HEK293T (cell line): ENCODE measurements at regions of chr15 and their contacts with region 1.

Region 1: GRCh38 chr15:67863442-67863987 is 23.7 kb upstream of the RNU6-1 start:
- DNase-seq: peak; percentile 91

Region 2: DNA sequence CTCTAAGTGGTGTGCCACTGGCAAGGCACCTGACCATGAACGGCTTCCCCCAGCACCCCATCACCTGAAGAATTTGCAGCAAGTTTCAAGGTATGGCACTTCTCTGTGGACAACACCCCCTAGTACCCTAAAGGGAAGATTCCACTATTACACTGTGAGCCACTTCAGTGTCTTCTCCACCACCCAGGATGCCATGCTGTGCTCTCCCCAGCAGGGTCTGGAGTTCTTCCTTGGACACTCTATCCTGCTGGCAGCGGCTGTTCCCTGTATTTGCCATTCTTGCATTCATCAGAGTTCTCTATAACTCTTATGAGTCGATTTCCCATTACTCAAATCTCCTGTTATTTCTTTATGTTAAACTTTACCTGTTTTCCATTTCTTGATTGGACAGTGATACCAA is 10.3 kb after region 1 on chr15:
- CTCF ChIA-PET with region 1: interaction called, 13 read pairs
- POLR2A ChIA-PET with region 1: no interaction called
- DNase-seq: no peak

Region 3: DNA sequence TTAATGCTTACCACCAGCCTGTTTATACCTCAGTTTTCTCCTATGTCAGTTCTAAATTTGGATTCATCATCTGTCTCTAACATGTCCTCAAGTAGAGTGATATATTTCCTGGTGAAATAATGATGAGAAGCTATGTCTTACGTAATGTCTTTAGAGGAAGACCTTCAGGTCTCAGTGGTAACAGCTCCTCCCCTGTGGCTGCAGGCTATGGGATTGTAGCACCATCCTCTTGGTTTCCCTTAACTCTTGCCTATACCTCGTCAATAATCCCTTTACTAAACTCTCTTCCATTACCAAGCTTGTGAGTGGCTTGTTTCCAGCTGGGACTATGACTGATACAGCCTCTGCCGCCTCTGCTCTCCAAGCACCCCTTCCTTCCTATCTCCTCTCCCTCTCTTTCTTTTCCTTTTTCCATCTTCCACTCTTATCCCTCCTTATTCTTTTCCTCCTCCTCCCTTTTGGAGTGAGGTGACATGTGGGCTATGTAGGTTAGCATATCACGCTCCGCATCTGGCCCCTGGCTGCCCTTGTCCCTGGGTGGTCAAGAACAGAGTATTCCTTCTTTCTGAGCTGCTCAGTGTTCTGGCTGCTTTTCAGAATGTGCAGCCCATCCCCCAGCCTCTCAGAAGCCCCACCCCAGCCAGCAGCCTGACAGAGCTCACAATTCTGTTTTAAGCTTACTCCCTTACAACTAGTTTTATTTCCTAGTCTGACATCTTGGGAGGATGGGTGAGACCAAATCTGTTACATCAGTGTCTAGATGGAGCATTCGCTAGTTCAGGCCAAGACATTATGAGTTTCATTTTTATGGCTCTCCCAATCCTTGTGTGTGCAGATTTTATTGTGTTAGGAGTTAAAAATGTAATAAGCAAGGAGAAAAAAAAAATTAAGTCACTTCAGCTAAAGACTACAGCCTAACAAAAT is 51.3 kb after region 1 on chr15:
- CTCF ChIA-PET with region 1: interaction called, 12 read pairs
- POLR2A ChIA-PET with region 1: no interaction called
- DNase-seq: no peak

Region 4: GRCh38 chr15:68154923-68155559 is 291.5 kb after region 1 on chr15:
- CTCF ChIA-PET with region 1: interaction called, 11 read pairs
- POLR2A ChIA-PET with region 1: no interaction called
- DNase-seq: peak; percentile 37